Activated naive CD8-positive, alpha-beta T cell treated with anti-CD3 and anti-CD28 coated beads, Interleukin-2, amount 10 ng/mL, durations not matched to agents 7 days and 5 days (primary cell): ENCODE measurements at regions of chr12 and their contacts with region 1.

Region 1: DNA sequence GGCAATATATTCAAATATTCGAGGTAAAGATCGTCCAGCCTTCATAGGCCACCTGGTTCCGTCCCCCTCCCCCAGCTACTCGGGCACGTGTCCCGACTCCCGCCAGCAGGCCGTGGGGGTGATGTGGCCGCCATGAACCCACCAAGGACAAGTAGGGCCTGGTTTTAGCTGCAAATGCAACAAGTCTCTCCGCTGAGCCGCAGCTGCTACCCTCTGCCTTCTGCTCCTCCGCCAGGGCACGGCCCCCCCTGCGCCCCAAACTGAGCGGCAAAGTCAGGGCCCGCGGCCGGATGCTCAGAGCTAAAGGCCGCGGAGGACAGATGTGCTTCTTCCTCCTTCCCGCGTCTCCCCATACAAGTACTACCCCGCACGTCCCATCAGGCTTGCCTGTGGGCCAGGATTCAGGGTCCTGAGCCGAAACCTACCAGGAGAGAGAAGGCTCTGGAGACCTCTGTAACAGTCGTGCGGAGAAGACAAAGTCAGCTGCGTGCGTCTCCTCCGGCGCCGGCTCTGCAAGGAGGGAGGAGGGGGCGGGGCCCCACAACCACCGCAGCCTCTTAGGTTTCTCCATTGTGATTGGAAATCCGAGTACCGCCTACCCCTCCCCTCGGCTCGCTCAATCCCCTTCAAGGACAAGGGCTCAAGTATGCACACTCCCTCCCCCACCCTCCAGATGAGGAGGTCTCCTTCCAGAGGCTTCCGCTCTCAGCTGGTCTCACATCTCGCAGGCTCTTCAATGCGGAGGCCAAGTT is at the start of gene LDHB:
- DNase-seq: peak; percentile 91
- ATAC-seq: peak; percentile 97
- H3K4me3 Mint-ChIP-seq: peak within 1 kb of the TSS; percentile 98
- H3K27ac Mint-ChIP-seq: peak within 1 kb of the TSS; percentile 99
- H3K4me1 Mint-ChIP-seq: peaks cover 33% of the 10 kb centered on the region
- H3K27me3 Mint-ChIP-seq: no peaks in the 10 kb centered on the region
- total RNA-seq, gene LDHB: 911 to 954 TPM

Region 2: GRCh38 chr12:21438643-21439042 is 218.9 kb before region 1 on chr12:
- POLR2A ChIA-PET with region 1: interaction called, 10 read pairs
- DNase-seq: no peak
- ATAC-seq: no peak
- H3K4me3 Mint-ChIP-seq: peak overlapping the region; percentile 93
- H3K27ac Mint-ChIP-seq: peak overlapping the region; percentile 92
- H3K4me1 Mint-ChIP-seq: peaks cover 23% of the 10 kb centered on the region
- H3K27me3 Mint-ChIP-seq: no peaks in the 10 kb centered on the region

Region 3: DNA sequence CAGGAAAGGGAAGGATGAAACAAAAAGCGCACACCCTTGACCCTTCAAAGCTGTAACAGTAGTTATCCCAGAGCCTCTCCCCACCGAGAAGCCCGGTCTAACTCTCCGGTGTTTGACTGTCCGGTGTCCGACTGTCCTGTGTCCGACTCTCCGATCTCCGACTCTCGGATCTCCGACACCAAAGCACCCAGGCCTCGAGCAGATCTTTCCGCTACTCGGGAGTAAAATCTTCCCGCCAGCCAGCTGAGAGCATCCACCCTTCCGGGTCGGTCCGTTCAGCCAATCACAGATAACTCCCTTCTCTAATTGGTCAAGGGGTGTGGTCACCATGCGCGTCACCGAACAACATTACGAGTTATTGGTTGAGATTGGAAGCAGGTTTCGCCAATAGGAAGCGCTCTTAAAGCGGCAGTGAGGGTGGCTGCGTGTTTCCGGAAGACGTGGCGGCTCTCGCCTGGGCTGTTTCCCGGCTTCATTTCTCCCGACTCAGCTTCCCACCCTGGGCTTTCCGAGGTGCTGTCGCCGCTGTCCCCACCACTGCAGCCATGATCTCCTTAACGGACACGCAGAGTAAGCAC is 156.0 kb before region 1 on chr12 and contains the starts of genes GOLT1B and RECQL:
- POLR2A ChIA-PET with region 1: interaction called, 33 read pairs
- DNase-seq: peak; percentile 79
- ATAC-seq: peak; percentile 94
- H3K4me3 Mint-ChIP-seq: no peak within 1 kb of the TSS
- H3K27ac Mint-ChIP-seq: no peak within 1 kb of the TSS
- H3K4me1 Mint-ChIP-seq: peaks cover 36% of the 10 kb centered on the region
- H3K27me3 Mint-ChIP-seq: no peaks in the 10 kb centered on the region
- total RNA-seq, gene GOLT1B: 33.2 to 38.1 TPM
- total RNA-seq, gene RECQL: 82.1 to 86.8 TPM

Region 4: GRCh38 chr12:21677622-21678277 is 20.2 kb after region 1 on chr12:
- POLR2A ChIA-PET with region 1: interaction called, 17 read pairs
- DNase-seq: no peak
- ATAC-seq: no peak
- H3K4me3 Mint-ChIP-seq: no peak overlapping the region
- H3K27ac Mint-ChIP-seq: peak overlapping the region; percentile 70
- H3K4me1 Mint-ChIP-seq: peaks cover 33% of the 10 kb centered on the region
- H3K27me3 Mint-ChIP-seq: no peaks in the 10 kb centered on the region